GM12878 (cell line): ENCODE measurements at regions of chr7 and their contacts with region 1.

Region 1: DNA sequence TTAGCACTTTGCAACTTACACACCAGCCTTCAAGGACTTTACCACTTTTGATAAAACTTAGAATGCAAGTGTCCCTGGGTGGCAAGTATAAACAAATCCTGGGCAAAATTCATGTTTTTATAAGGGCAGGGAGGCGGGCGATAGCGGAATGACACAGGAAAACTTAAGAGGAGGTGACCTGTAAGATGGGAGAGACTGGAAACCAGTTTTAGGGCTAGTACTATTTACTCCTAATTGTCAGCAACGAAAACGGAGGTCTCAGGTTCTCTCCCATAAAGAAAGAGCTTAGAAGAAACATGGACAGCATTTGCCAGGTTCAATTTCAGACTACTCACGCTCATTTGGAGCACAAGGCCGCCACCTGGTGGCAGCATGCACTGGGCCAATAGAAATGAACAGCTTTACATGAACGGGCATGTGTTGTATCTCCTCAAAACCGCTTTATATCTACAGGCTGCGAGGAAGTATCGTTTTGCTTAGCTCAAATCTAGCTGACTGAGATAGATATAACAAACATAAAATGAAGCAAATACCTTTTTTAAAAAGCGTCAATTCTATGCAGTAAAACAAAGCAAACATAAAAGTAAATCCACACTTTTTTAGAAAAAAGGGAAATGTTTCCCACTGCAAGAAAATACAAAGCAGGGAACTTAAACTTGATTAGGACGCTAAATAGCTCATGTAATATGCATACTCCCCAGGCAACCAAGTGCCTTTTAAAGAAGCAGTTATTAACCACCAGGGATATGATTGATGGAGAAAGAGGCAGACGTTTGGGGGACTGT is 37.6 kb upstream of the SVOPL start:
- DNase-seq: peak; percentile 64
- ATAC-seq: peak; percentile 99
- H3K4me3 ChIP-seq: no peak overlapping the region
- H3K27ac ChIP-seq: no peak overlapping the region
- H3K4me1 ChIP-seq: no peaks in the 10 kb centered on the region
- H3K27me3 ChIP-seq: no peaks in the 10 kb centered on the region
- CTCF ChIP-seq: peak; percentile 87 to 98 (median 94); a peak in 5 of 6 replicates
- EP300 ChIP-seq: no peak
- POLR2A ChIP-seq: no peak
- RAD21 ChIP-seq: peak; percentile 98

Region 2: GRCh38 chr7:138008547-138009349 is 730.0 kb before region 1 on chr7:
- CTCF ChIA-PET with region 1: interaction called, 10 read pairs
- POLR2A ChIA-PET with region 1: no interaction called
- RAD21 ChIA-PET with region 1: interaction called, 6 read pairs
- SMC1A ChIA-PET with region 1: interaction called, 14 read pairs
- in situ Hi-C with region 1: loop called (anchors 5 kb)
- intact Hi-C with region 1: loop called (anchors 2 kb)
- DNase-seq: no peak
- ATAC-seq: peak; percentile 86
- H3K4me3 ChIP-seq: no peak overlapping the region
- H3K27ac ChIP-seq: no peak overlapping the region
- H3K4me1 ChIP-seq: no peaks in the 10 kb centered on the region
- H3K27me3 ChIP-seq: no peaks in the 10 kb centered on the region
- CTCF ChIP-seq: peak; percentile 80 to 84 (median 80)
- EP300 ChIP-seq: no peak; a peak in 1 of 4 replicates
- POLR2A ChIP-seq: no peak
- RAD21 ChIP-seq: peak; percentile 100

Region 3: GRCh38 chr7:138161600-138162081 is 577.1 kb before region 1 on chr7:
- CTCF ChIA-PET with region 1: interaction called, 92 read pairs
- POLR2A ChIA-PET with region 1: no interaction called
- RAD21 ChIA-PET with region 1: interaction called, 92 read pairs
- SMC1A ChIA-PET with region 1: interaction called, 87 read pairs
- in situ Hi-C with region 1: loop called (anchors 5 kb)
- intact Hi-C with region 1: loop called (anchors 1 kb)
- DNase-seq: peak; percentile 76
- ATAC-seq: peak; percentile 100
- H3K4me3 ChIP-seq: no peak overlapping the region
- H3K27ac ChIP-seq: no peak overlapping the region
- H3K4me1 ChIP-seq: peaks cover 5% of the 10 kb centered on the region
- H3K27me3 ChIP-seq: no peaks in the 10 kb centered on the region
- CTCF ChIP-seq: peak; percentile 70 to 91 (median 85)
- EP300 ChIP-seq: no peak
- POLR2A ChIP-seq: no peak
- RAD21 ChIP-seq: peak; percentile 81

Region 4: GRCh38 chr7:138449580-138449979 is 289.2 kb before region 1 on chr7:
- CTCF ChIA-PET with region 1: interaction called, 20 read pairs
- POLR2A ChIA-PET with region 1: interaction called, 3 read pairs
- RAD21 ChIA-PET with region 1: interaction called, 5 read pairs
- SMC1A ChIA-PET with region 1: interaction called, 13 read pairs
- in situ Hi-C with region 1: loop called (anchors 5 kb)
- intact Hi-C with region 1: loop called (anchors 1 kb)
- DNase-seq: no peak
- ATAC-seq: peak; percentile 54
- H3K4me3 ChIP-seq: no peak overlapping the region
- H3K27ac ChIP-seq: no peak overlapping the region
- H3K4me1 ChIP-seq: no peaks in the 10 kb centered on the region
- H3K27me3 ChIP-seq: no peaks in the 10 kb centered on the region
- CTCF ChIP-seq: peak; percentile 31 to 69 (median 55)
- EP300 ChIP-seq: no peak
- POLR2A ChIP-seq: no peak
- RAD21 ChIP-seq: peak; percentile 60

Region 5: DNA sequence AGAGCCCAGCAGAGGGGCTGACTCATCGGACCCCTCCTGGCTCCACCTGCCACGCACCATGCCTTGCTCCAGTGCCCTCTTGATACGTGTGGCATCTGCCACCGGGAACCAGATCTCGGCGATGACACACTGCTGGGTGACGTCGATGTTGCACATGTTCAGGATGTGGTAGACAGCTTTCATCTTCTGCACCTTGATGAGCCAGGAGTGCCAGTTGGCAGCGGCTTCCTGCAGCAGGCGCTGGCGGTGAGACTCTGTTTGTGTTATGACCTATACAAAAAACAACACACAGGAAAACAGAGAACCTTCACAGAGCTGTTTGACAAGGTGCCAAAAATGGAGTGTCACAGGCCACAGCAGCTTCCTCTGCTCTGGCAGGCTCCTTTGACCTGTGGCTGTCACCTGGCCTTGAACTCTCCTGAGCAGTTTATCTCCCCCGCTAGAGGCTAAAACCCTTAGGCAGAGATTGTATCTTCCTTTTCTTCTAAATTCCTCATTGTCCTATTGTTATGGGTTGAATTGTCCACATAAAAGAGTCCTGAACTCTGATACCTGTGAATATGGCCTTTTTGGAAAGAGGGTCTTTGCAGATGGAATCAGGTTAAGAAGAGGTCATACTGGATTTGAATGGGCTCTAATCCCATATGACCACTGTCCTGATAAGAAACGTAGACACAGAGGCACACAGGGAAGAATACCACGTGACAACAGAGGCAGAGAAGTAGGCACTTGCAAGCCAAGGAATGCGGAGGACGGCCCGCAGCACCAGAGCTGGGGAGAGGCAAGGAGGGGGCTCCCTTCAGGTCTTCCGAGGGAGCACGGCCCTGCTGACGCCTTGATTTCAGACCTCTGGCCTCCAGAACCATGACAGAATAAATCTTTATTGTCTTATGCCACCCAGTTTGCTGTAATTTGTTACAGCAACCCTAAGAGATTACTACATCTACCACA is 14.1 kb after region 1 on chr7:
- CTCF ChIA-PET with region 1: interaction called, 10 read pairs
- POLR2A ChIA-PET with region 1: no interaction called
- RAD21 ChIA-PET with region 1: no interaction called
- SMC1A ChIA-PET with region 1: interaction called, 3 read pairs
- in situ Hi-C with region 1: no loop called
- intact Hi-C with region 1: no loop called
- DNase-seq: peak; percentile 38
- ATAC-seq: peak; percentile 91
- H3K4me3 ChIP-seq: no peak overlapping the region
- H3K27ac ChIP-seq: no peak overlapping the region
- H3K4me1 ChIP-seq: no peaks in the 10 kb centered on the region
- H3K27me3 ChIP-seq: no peaks in the 10 kb centered on the region; a peak in 1 of 4 replicates
- CTCF ChIP-seq: no peak
- EP300 ChIP-seq: peak; percentile 46 to 51; a peak in 1 of 4 replicates
- POLR2A ChIP-seq: no peak
- RAD21 ChIP-seq: no peak